Body of pancreas (tissue), 4 donors: ENCODE measurements at regions of chr12 and their contacts with region 1.

Region 1: GRCh38 chr12:56271031-56271430 is 4.3 kb downstream of the COQ10A start:
- DNase-seq: peak in 1 of 4 donors; percentile 13
- ATAC-seq: no peak
- H3K4me3 ChIP-seq: no peak overlapping the region
- H3K27ac ChIP-seq: no peak overlapping the region
- H3K4me1 ChIP-seq: peaks cover 15% of the 10 kb centered on the region
- H3K27me3 ChIP-seq: no peaks in the 10 kb centered on the region
- CTCF ChIP-seq: peak in 3 of 7 experiments; percentile 21 to 31 (median 29)
- POLR2A ChIP-seq: no peak

Region 2: GRCh38 chr12:56212361-56212760 is 58.7 kb before region 1 on chr12:
- intact Hi-C with region 1: loop called (anchors 10 kb)
- DNase-seq: no peak
- ATAC-seq: no peak
- H3K4me3 ChIP-seq: no peak overlapping the region
- H3K27ac ChIP-seq: no peak overlapping the region
- H3K4me1 ChIP-seq: peaks cover 7% of the 10 kb centered on the region
- H3K27me3 ChIP-seq: no peaks in the 10 kb centered on the region
- CTCF ChIP-seq: no peak
- POLR2A ChIP-seq: no peak

Region 3: DNA sequence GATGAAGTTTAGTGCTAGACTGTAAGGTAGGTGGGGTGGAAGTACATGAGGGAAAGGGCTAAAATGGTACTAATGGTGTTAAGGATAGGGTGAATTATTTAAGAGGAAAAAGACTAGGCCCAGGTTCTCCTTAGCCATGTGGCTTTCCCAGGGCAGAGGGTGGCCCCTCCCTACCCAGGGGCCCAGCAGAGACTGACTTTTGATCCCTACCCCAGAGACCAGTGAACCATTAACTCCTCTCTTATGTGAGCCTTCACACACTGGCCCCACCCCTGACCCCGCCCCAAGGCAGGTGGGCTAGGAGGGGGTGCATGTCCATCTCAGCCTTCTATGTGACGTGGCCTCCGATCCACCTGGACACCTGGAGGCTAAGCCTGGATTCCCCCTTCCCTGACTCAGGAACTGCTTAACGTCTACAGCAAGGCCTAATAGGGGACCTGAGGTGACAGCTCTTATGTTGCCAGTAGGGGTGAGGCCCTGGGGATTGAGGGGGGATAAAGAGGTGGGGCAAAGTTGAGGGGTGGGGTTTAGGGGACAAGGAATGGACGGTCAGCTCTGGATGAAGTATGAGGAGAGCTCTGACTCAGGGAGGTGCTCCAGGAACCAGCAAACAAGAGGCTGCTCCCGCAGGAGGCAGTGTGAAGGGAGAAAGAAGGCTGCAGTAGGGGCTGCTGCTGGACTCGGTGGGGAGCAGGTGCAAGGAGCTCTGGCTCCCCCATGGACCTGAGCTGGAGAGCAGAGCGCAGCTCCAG is 40.4 kb before region 1 on chr12:
- intact Hi-C with region 1: no loop called
- DNase-seq: peak; percentile 92 to 95 (median 95)
- ATAC-seq: peak; percentile 93
- H3K4me3 ChIP-seq: peak overlapping the region; percentile 47 to 51
- H3K27ac ChIP-seq: peak overlapping the region; percentile 72 to 89 (median 86)
- H3K4me1 ChIP-seq: peaks cover 42% of the 10 kb centered on the region
- H3K27me3 ChIP-seq: no peaks in the 10 kb centered on the region
- CTCF ChIP-seq: peak in 2 of 7 experiments; percentile 1 to 8
- POLR2A ChIP-seq: peak; percentile 63 to 88 (median 84)